Keratinocyte (primary cell): ENCODE measurements at regions of chr21 and their contacts with region 1.

Region 1: DNA sequence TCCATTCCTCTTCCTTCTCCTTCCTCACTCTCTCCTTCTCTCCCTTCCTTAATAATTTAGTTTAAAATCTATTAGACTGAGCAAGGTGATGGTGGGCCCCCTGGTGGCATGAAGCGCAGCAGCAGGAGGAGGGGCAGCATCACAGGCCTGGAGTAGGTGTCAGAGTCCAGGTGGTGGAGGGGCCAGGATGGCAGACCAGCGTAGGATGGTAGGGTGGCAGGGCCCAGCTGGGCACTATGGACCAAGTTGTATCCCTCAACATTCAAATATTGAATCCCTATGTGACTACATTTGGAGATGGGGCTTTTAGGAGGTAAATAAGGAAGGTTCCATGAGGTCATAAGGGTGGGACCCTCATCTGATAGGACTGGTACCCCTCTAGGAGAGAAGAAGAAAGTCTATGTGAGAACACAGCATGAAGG is 61.0 kb downstream of the WDR4 start:
- DNase-seq: peak; percentile 15
- H3K4me3 ChIP-seq: no peak overlapping the region
- H3K27ac ChIP-seq: no peak overlapping the region
- H3K4me1 ChIP-seq: no peaks in the 10 kb centered on the region
- H3K27me3 ChIP-seq: peaks cover 5% of the 10 kb centered on the region
- CTCF ChIP-seq: peak; percentile 86 to 91 (median 88)

Region 2: DNA sequence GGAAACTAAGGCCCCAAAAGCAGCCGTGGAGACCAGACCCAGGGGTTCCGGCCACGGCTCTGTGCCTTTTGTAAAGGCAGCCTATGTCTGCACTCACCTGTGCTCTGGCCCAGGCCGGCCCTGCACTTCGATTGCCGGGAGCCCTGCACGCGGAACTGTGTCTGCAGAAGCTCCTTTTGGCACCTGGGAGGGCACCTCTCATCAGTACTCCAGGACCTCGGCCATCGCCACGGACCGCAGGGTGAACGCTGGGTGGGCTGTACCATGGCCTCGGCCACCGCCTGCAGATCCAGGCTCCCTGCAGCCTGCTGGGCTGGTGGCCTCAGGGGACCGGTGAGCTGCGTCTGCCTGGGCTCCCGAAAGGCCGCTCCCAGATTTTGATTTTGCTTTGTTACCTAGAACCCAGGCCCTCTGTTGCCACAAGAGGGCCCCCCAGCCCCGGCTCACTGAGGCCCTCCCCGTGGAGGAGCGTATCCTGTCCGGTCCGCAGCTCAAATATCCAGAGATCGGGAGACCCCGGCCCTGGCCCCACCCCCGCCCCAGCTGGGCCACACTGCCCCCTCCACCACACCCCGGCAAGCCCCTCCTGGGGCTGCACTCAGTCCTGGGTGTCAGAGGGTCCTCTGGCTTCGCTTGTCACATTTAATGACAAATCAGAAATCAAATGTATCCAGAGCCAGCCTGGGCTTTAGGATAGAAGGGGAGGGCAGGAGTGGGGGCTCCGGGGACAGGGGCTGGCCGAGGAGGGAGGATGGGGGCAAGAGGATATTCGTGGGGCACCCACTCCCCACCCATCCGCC is 225.1 kb before region 1 on chr21:
- dilution Hi-C with region 1: loop called (anchors 10 kb)
- DNase-seq: no peak
- H3K4me3 ChIP-seq: no peak overlapping the region
- H3K27ac ChIP-seq: no peak overlapping the region
- H3K4me1 ChIP-seq: no peaks in the 10 kb centered on the region
- H3K27me3 ChIP-seq: no peaks in the 10 kb centered on the region
- CTCF ChIP-seq: peak; percentile 55 to 92 (median 75)